B cell (primary cell): ENCODE measurements at regions of chr4 and their contacts with region 1.

Region 1: DNA sequence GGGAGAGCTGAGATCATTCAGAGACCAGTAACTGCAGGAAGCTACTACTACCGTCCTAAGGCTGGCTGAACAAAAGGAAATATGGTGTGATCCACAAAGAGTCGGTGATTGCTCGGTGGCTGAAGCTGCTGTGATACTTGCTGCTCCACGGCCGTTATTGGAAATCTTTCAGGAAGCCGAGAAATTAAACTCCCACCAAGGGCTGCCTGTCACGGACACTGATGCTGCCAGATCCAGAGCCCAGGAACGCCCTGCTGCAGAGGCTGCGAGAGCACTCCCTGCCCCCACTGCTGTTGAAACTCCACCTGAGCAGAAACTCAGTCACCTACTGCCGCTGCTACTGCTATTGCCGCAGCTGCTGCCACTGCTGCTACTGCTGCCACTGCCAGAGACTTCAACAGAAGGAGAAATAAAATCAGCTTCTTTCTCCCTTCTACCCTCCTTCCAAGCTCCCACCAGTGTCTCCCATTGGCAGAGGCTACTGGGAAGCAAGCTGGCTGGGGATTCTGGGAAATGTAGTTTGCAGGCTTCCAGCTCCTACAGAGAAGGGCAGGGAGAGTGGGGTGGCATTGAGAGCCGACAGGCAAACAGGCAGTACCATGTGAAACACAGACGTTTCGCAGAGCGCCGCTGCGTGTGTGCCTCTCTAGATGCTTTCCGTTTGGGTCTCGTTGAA is 126.0 kb upstream of the ENPP6 start:
- DNase-seq: peak; percentile 67
- ATAC-seq: peak; percentile 37
- H3K4me3 ChIP-seq: peak overlapping the region; percentile 55 to 70 (median 62)
- H3K4me3 Mint-ChIP-seq: peak overlapping the region; percentile 92
- H3K27ac ChIP-seq: peak overlapping the region; percentile 54 to 75
- H3K27ac Mint-ChIP-seq: peak overlapping the region; percentile 87
- H3K4me1 ChIP-seq: peaks cover 66 to 71% of the 10 kb centered on the region in 2 donors
- H3K4me1 Mint-ChIP-seq: peaks cover 68% of the 10 kb centered on the region
- H3K27me3 ChIP-seq: no peaks in the 10 kb centered on the region
- H3K27me3 Mint-ChIP-seq: no peaks in the 10 kb centered on the region
- CTCF ChIP-seq: no peak

Region 2: DNA sequence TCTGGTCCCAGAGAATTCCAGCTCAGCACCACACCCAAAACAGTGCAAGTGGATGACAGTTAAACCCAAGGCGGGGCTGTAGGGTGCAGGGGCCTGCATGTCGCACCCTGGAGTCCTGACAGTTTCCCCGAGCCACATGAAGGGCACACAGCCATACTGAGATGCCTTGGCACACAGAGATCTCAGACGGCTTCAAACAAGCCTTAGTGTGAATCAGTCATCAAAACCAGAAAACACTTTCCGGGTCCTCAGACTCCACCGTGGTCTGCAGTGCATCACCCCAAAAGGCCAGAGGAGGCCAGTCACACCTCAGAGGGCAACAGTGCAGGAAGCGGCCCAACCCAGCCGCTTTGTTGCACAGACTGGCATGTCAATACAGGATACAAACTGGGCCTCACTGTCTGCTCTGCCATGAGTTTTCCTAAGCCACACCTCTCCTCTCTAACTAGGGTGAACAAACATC is 61.4 kb before region 1 on chr4:
- CTCF ChIA-PET with region 1: interaction called, 10 read pairs
- POLR2A ChIA-PET with region 1: interaction called, 3 read pairs
- intact Hi-C with region 1: no loop called
- DNase-seq: peak; percentile 62
- ATAC-seq: peak; percentile 72
- H3K4me3 ChIP-seq: no peak overlapping the region
- H3K4me3 Mint-ChIP-seq: peak overlapping the region; percentile 77
- H3K27ac ChIP-seq: peak overlapping the region; percentile 28 to 73
- H3K27ac Mint-ChIP-seq: peak overlapping the region; percentile 90
- H3K4me1 ChIP-seq: peaks cover 48% of the 10 kb centered on the region in 2 donors
- H3K4me1 Mint-ChIP-seq: peaks cover 58% of the 10 kb centered on the region
- H3K27me3 ChIP-seq: no peaks in the 10 kb centered on the region
- H3K27me3 Mint-ChIP-seq: no peaks in the 10 kb centered on the region
- CTCF ChIP-seq: peak; percentile 34

Region 3: DNA sequence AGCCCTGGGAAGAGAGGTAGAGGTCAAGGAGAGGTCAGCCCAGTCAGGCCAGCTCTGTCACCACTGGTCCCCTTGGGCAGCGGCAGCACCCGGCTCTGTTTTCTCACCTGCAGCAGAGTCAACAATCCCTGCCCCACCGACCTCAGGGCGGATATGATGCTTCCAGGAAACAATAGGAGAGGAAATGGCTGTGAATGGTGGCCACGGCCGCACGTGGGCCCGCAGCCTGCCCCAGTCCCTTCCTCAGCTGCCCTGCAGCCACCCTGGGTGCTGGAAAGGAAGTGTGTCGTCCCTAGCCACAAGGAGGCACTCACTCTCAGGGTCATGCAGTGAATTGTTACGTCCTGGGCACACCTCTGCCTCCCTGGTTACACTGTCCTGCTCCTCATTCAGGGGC is 33.5 kb before region 1 on chr4:
- CTCF ChIA-PET with region 1: interaction called, 5 read pairs
- POLR2A ChIA-PET with region 1: interaction called, 4 read pairs
- intact Hi-C with region 1: loop called (anchors 1 kb)
- DNase-seq: peak; percentile 71
- ATAC-seq: peak; percentile 21
- H3K4me3 ChIP-seq: no peak overlapping the region
- H3K4me3 Mint-ChIP-seq: peak overlapping the region; percentile 29
- H3K27ac ChIP-seq: no peak overlapping the region
- H3K27ac Mint-ChIP-seq: peak overlapping the region; percentile 56
- H3K4me1 ChIP-seq: peaks cover 46 to 48% of the 10 kb centered on the region in 2 donors
- H3K4me1 Mint-ChIP-seq: peaks cover 60% of the 10 kb centered on the region
- H3K27me3 ChIP-seq: no peaks in the 10 kb centered on the region
- H3K27me3 Mint-ChIP-seq: no peaks in the 10 kb centered on the region
- CTCF ChIP-seq: peak; percentile 58

Region 4: DNA sequence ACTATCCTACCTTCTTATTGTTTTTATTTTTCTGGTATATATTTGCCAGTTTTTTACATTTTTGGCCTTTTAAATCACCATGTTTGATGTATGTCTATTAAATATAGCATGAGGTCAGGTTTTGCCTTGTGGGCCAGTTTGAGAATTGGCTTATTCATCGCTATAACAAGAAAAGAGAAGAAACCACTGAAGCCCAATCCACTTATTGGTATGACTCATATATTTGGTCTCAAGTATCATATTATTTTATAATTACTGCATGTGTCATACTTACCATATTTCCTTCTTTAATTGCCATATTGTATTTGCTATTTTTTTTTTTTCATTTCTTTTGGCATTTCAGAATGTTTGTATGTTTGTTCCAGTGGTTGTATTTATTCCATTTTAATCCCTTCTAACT is 31.4 kb after region 1 on chr4:
- CTCF ChIA-PET with region 1: no interaction called
- POLR2A ChIA-PET with region 1: no interaction called
- intact Hi-C with region 1: no loop called
- DNase-seq: no peak
- ATAC-seq: no peak
- H3K4me3 ChIP-seq: no peak overlapping the region
- H3K4me3 Mint-ChIP-seq: no peak overlapping the region
- H3K27ac ChIP-seq: no peak overlapping the region
- H3K27ac Mint-ChIP-seq: no peak overlapping the region
- H3K4me1 ChIP-seq: peaks cover 0 to 12% of the 10 kb centered on the region in 2 donors
- H3K4me1 Mint-ChIP-seq: peaks cover 29% of the 10 kb centered on the region
- H3K27me3 ChIP-seq: no peaks in the 10 kb centered on the region
- H3K27me3 Mint-ChIP-seq: no peaks in the 10 kb centered on the region
- CTCF ChIP-seq: no peak

Region 5: GRCh38 chr4:184395971-184396391 is 52.3 kb after region 1 on chr4:
- CTCF ChIA-PET with region 1: interaction called, 4 read pairs
- POLR2A ChIA-PET with region 1: interaction called, 3 read pairs
- intact Hi-C with region 1: loop called (anchors 1 kb)
- DNase-seq: peak; percentile 87
- ATAC-seq: peak; percentile 90
- H3K4me3 ChIP-seq: peak overlapping the region in 4 of 5 experiments; percentile 10 to 44 (median 15)
- H3K4me3 Mint-ChIP-seq: peak overlapping the region; percentile 89
- H3K27ac ChIP-seq: peak overlapping the region; percentile 9 to 79
- H3K27ac Mint-ChIP-seq: peak overlapping the region; percentile 95
- H3K4me1 ChIP-seq: peaks cover 27 to 35% of the 10 kb centered on the region in 2 donors
- H3K4me1 Mint-ChIP-seq: peaks cover 44% of the 10 kb centered on the region
- H3K27me3 ChIP-seq: no peaks in the 10 kb centered on the region
- H3K27me3 Mint-ChIP-seq: no peaks in the 10 kb centered on the region
- CTCF ChIP-seq: peak; percentile 15

Region 6: DNA sequence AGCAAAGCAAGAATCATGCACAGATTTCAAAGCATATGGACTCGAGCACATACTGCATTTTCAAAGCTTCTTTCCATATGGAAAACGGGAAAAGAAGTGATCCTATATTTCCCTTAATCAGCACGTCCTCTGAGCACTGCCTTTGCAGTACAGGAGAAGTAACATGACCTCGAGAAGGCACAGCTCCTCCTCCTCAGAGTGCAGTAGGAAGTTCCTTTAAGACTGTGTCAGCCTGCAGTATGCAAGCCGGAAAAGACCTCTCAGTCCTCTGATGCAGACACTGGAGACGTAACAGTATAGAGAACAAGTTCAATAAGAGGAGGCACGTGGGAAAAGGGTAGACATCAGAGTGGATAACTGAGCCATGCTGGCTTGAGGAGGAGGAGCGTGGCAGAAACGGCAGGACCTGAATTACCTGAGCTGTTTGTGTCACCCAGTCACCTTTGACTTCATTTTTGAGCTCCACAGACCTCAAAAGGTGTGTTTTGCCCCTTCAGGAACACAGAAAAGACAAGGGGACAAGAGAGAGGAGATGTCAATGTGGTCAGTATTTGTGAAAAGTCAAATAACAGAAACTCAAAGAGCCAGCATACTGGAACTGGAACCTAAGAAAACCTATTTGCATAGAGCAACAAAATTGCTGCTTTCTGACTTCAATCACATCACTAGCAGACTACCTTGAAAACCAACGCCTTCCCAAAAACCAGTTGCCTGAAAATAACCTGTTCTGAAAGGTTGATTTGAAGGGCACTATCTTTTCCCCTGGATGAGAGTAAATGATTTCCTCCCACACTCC is 109.9 kb after region 1 on chr4:
- CTCF ChIA-PET with region 1: no interaction called
- POLR2A ChIA-PET with region 1: no interaction called
- intact Hi-C with region 1: loop called (anchors 5 kb)
- DNase-seq: peak; percentile 63
- ATAC-seq: peak; percentile 66
- H3K4me3 ChIP-seq: peak overlapping the region in 2 of 5 experiments; percentile 23 to 27
- H3K4me3 Mint-ChIP-seq: peak overlapping the region; percentile 80
- H3K27ac ChIP-seq: peak overlapping the region; percentile 60 to 69
- H3K27ac Mint-ChIP-seq: peak overlapping the region; percentile 91
- H3K4me1 ChIP-seq: peaks cover 83 to 85% of the 10 kb centered on the region in 2 donors
- H3K4me1 Mint-ChIP-seq: peaks cover 85% of the 10 kb centered on the region
- H3K27me3 ChIP-seq: no peaks in the 10 kb centered on the region
- H3K27me3 Mint-ChIP-seq: no peaks in the 10 kb centered on the region
- CTCF ChIP-seq: no peak